ENCODE measurements at regions of chrX and their contacts with region 1.

Region 1: GRCh38 chrX:66731398-66731797 is 92.5 kb upstream of the EDA2R start:
- DNase-seq: no peak

Region 2: GRCh38 chrX:67718926-67719325 is 987.5 kb after region 1 on chrX:
- intact Hi-C with region 1: loop called in 1 of 2 experiments (anchors 5 kb)
- DNase-seq: no peak

Measured in posterior vena cava (tissue), 2 donors.